HCT116 (cell line): ENCODE measurements at regions of chr7 and their contacts with region 1.

Region 1: GRCh38 chr7:39252916-39253315 is 275.2 kb downstream of the POU6F2 start:
- DNase-seq: no peak
- ATAC-seq: no peak
- H3K4me3 ChIP-seq: no peak overlapping the region
- H3K27ac ChIP-seq: no peak overlapping the region
- H3K4me1 ChIP-seq: no peaks in the 10 kb centered on the region
- H3K27me3 ChIP-seq: peaks cover 56% of the 10 kb centered on the region
- CTCF ChIP-seq: no peak
- POLR2A ChIP-seq: no peak
- RAD21 ChIP-seq: no peak

Region 2: GRCh38 chr7:39144420-39144819 is 108.5 kb before region 1 on chr7:
- CTCF ChIA-PET with region 1: no interaction called
- POLR2A ChIA-PET with region 1: no interaction called
- RAD21 ChIA-PET with region 1: no interaction called
- intact Hi-C with region 1: no loop called
- DNase-seq: no peak
- ATAC-seq: no peak
- H3K4me3 ChIP-seq: no peak overlapping the region
- H3K27ac ChIP-seq: no peak overlapping the region
- H3K4me1 ChIP-seq: no peaks in the 10 kb centered on the region
- H3K27me3 ChIP-seq: peaks cover 39% of the 10 kb centered on the region
- CTCF ChIP-seq: no peak
- POLR2A ChIP-seq: no peak
- RAD21 ChIP-seq: no peak

Region 3: GRCh38 chr7:39291628-39292410 is 38.9 kb after region 1 on chr7:
- CTCF ChIA-PET with region 1: no interaction called
- POLR2A ChIA-PET with region 1: no interaction called
- RAD21 ChIA-PET with region 1: no interaction called
- intact Hi-C with region 1: loop called (anchors 1 kb)
- DNase-seq: no peak
- ATAC-seq: no peak
- H3K4me3 ChIP-seq: no peak overlapping the region
- H3K27ac ChIP-seq: no peak overlapping the region
- H3K4me1 ChIP-seq: no peaks in the 10 kb centered on the region
- H3K27me3 ChIP-seq: peaks cover 37% of the 10 kb centered on the region
- CTCF ChIP-seq: no peak
- POLR2A ChIP-seq: no peak
- RAD21 ChIP-seq: no peak